ENCODE measurements at regions of chr7 and their contacts with region 1.

Region 1: DNA sequence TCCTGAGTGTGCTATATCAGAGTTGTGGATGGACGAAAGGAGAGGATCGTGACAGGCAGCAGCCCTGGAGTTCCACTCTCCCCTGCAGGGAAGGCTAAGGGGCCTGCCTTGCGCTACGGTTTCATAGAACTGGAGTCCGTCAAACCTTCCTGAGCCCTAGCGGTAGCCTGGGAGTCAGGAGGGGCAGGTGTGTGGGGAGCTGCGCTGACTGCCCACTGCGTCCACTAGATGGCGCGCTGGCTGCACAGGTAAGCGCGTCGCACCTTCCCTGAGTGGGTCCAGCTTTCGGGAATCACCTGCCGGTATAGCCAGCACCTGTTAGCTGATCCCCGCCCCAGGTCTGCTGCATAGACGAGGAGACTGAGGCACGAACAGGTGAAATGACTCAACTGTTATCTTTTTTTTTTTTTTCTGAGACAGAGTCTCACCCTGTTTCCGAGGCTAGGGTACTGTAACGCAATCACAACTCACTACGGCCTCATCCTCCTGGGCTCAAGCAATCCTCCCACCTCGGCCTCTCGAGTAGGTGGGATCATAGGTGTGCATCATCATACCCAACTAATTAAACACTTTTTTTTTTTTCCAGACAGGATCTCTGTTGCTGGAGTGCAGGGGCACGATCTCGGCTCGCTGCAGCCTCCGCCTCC is 20.2 kb upstream of the BAIAP2L1 start:
- DNase-seq: peak; percentile 89 to 92
- ATAC-seq: peak; percentile 53 to 64; a peak in 5 of 6 replicates
- H3K4me3 ChIP-seq: no peak overlapping the region
- H3K27ac ChIP-seq: peak overlapping the region; percentile 55 to 72
- H3K4me1 ChIP-seq: peaks cover 43% of the 10 kb centered on the region
- CTCF ChIP-seq: peak; percentile 94
- EP300 ChIP-seq: no peak
- POLR2A ChIP-seq: no peak
- RAD21 ChIP-seq: peak; percentile 83 to 84

Region 2: GRCh38 chr7:98294796-98295382 is 126.2 kb before region 1 on chr7:
- CTCF ChIA-PET with region 1: interaction called, 28 read pairs
- POLR2A ChIA-PET with region 1: no interaction called
- DNase-seq: peak; percentile 75 to 85
- ATAC-seq: peak; percentile 82 to 90
- H3K4me3 ChIP-seq: no peak overlapping the region
- H3K27ac ChIP-seq: peak overlapping the region; percentile 40 to 81
- H3K4me1 ChIP-seq: peaks cover 13% of the 10 kb centered on the region
- CTCF ChIP-seq: peak; percentile 90
- EP300 ChIP-seq: no peak
- POLR2A ChIP-seq: no peak
- RAD21 ChIP-seq: peak; percentile 93 to 96

Region 3: DNA sequence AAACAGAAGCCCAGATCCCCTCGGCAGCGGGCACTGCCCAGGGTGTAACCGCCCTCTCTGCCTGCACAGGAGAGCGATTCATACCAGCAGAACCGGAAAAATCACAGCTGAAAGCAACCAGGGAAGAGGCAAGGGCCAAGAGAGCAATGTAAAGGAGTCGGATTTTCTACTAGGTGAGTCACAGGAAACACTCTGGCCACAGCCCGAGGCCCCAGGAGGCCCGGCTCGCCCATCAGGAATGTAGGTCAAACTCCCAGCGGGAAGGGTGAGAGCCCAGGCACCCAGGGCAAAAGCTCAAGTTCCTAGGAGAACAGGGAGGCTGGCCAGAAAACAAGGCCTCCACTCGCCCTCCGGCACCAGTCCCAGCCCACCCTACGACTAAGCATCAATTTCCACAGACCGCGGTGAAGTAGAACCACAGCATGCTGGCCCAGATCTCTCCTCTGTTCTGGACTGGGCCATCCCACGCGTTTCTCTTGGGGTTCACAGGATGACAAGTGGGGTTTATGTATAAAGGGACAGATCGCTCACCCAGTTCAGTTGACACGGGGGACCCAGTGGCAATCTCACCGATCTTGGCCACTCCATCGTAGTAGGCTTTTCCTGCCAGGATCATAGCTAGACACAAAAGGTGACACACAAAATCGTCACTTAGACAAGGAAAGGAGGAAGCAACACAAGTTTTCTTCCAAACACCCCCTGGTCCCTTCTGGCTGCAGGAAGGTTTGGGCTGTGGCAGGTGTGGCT is 66.4 kb before region 1 on chr7:
- CTCF ChIA-PET with region 1: interaction called, 13 read pairs
- POLR2A ChIA-PET with region 1: interaction called, 3 read pairs
- DNase-seq: peak; percentile 69 to 94
- ATAC-seq: peak; percentile 88 to 93
- H3K4me3 ChIP-seq: peak overlapping the region; percentile 23; the same call in 2 of the 3 replicates
- H3K27ac ChIP-seq: peak overlapping the region; percentile 95 to 97
- H3K4me1 ChIP-seq: peaks cover 75% of the 10 kb centered on the region
- CTCF ChIP-seq: no peak
- EP300 ChIP-seq: peak; percentile 67 to 83; a peak in 3 of 5 replicates
- POLR2A ChIP-seq: no peak
- RAD21 ChIP-seq: peak in 1 of 2 experiments; percentile 31; a peak in 2 of 5 replicates

Region 4: DNA sequence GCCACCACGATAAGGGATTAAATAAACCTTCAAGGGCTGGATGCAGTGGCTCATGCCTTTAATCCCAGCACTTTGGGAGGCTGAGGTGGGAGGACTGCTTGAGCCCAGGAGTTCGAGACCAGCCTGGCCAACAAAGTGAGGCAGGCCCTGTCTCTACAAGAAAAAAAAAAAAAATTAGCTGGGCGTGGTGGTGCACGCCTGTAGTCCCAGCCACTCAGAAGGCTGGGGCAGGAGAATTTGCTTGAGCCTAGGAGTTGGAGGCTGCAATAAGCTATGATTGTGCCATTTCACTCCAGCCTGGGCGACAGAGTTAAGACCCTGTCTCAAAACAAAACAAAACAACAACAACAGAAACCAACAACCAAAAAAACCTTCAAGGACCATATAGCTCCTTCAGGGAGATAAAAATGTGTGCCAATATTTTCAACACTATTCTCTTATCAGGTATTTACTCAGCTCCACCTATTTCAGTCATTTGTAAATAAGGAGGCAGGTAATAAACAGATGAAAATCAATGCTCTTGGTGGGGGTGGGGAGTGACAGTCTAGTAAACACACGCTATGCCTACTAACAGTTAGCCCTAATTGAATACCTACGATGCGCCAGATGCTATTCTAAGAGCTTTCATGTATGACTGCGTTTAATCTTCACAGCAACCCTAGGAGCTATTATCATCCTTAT is 33.4 kb before region 1 on chr7:
- CTCF ChIA-PET with region 1: interaction called, 17 read pairs
- POLR2A ChIA-PET with region 1: no interaction called
- DNase-seq: no peak
- ATAC-seq: no peak
- H3K4me3 ChIP-seq: no peak overlapping the region
- H3K27ac ChIP-seq: no peak overlapping the region
- H3K4me1 ChIP-seq: peaks cover 5% of the 10 kb centered on the region; the same call in 1 of the 3 replicates
- CTCF ChIP-seq: no peak
- EP300 ChIP-seq: no peak
- POLR2A ChIP-seq: no peak
- RAD21 ChIP-seq: no peak

Region 5: DNA sequence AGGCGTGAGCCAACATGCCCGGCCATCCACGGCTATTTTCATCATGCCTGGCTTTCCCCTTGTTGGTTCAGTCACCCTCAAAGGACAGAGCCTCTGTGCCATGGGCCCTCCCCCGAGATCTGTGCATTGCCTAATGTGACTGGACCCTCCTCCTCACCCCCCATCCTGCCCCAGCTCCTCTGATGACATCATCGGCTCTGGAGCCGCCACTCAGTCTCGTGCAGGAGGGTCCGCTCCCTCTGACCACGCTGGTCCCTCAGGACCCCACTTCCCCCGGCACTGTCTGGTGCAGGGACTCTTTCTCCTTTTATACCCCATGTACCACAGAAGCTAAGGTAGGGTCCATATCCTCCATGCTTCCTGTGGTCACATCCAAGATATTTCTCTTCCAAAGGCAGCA is 13.0 kb after region 1 on chr7:
- CTCF ChIA-PET with region 1: interaction called, 65 read pairs
- POLR2A ChIA-PET with region 1: no interaction called
- DNase-seq: no peak
- ATAC-seq: no peak; a peak in 2 of 6 replicates
- H3K4me3 ChIP-seq: no peak overlapping the region
- H3K27ac ChIP-seq: no peak overlapping the region
- H3K4me1 ChIP-seq: no peaks in the 10 kb centered on the region
- CTCF ChIP-seq: no peak
- EP300 ChIP-seq: no peak
- POLR2A ChIP-seq: no peak
- RAD21 ChIP-seq: no peak

Region 6: DNA sequence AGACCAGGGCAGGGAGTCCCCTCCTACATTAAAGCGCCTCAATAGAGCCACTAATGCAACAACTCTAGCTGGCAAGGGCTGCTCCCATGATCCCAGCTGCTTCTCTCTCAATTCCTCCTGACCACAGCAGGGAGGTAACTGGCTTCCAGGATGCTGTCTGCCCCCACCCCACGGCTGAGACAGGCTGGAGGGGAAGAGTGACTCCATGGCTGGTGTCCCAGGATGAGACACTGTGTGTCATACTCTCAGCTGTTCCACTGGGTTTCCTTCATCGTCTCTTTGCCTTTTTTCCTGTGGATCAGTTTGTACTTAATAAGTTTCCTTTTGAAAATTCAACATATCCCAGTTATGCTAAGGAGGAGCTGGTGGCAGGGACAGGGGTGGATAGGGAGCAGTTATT is 823.9 kb after region 1 on chr7:
- CTCF ChIA-PET with region 1: no interaction called
- POLR2A ChIA-PET with region 1: no interaction called
- DNase-seq: no peak
- ATAC-seq: no peak; a peak in 2 of 6 replicates
- H3K4me3 ChIP-seq: no peak overlapping the region
- H3K27ac ChIP-seq: no peak overlapping the region
- H3K4me1 ChIP-seq: no peaks in the 10 kb centered on the region
- CTCF ChIP-seq: no peak
- EP300 ChIP-seq: no peak
- POLR2A ChIP-seq: no peak
- RAD21 ChIP-seq: no peak